Heart left ventricle (tissue), 16 donors: ENCODE measurements at regions of chr2 and their contacts with region 1.

Region 1: GRCh38 chr2:121649596-121650314 is 493 bp upstream of the CLASP1 start:
- DNase-seq: peak; percentile 97 to 98 (median 98)
- ATAC-seq: peak; percentile 98 to 99 (median 98)
- H3K4me3 ChIP-seq: peak overlapping the region; percentile 70 to 98 (median 86)
- H3K27ac ChIP-seq: peak overlapping the region; percentile 92 to 100 (median 96)
- H3K4me1 ChIP-seq: peaks cover 0 to 62% (median 53%) of the 10 kb centered on the region in 12 donors
- H3K27me3 ChIP-seq: no peaks in the 10 kb centered on the region
- CTCF ChIP-seq: peak in 1 of 12 donors; percentile 4
- POLR2A ChIP-seq: peak in 1 of 2 donors; percentile 41

Region 2: DNA sequence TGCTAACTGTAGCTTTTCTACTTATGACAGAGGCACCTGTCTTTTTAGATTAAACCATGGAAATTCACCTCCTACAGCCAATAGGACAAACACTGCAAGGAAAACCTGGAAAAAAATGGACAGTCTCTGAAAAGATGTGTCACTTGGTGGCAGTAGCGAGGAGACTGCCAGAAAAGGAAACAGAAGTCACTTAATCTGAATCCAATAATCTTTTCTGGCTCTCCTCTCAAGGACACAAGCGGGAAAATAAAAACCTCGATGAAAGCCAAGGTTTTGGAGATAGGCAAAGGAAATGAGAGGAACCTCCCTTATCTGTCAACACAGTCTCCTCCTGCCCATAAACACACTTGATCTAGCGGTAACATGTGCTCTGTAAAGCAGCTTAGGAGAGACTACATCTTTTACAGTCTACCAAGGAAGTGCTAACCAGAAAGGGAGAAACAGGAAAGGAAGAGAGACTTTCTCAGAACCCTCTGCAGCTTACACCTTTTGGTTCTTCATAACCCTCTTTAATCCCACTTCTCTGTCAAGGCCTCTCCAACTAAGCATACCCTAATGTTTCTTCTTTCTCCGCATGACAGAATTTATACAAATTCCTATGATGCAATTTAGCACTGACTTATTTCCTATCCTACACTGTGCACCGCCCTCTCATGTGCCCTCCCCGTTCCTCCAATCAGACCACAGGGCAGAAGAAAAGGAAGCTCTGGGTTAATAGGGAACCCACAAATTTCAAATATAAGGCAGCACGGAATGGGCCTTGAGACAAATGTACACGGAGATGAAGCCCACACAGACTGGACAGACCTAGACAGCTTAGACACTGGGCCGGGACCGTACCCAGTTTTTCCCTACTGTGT is 53.3 kb before region 1 on chr2:
- intact Hi-C with region 1: loop called in 9 of 10 experiments (anchors 1 to 5 kb)
- DNase-seq: peak in 1 of 5 donors; percentile 31
- ATAC-seq: peak; percentile 50 to 81 (median 72)
- H3K4me3 ChIP-seq: peak overlapping the region in 8 of 12 donors; percentile 4 to 37 (median 25)
- H3K27ac ChIP-seq: peak overlapping the region; percentile 25 to 82 (median 58)
- H3K4me1 ChIP-seq: peaks cover 0 to 50% (median 27%) of the 10 kb centered on the region in 12 donors
- H3K27me3 ChIP-seq: no peaks in the 10 kb centered on the region
- CTCF ChIP-seq: peak; percentile 25 to 75 (median 56)
- POLR2A ChIP-seq: no peak

Region 3: GRCh38 chr2:121605820-121606733 is 43.7 kb before region 1 on chr2:
- intact Hi-C with region 1: loop called in 4 of 10 experiments (anchors 5 kb)
- DNase-seq: no peak
- ATAC-seq: peak; percentile 38 to 71 (median 53)
- H3K4me3 ChIP-seq: no peak overlapping the region
- H3K27ac ChIP-seq: peak overlapping the region in 9 of 12 donors; percentile 4 to 69 (median 33)
- H3K4me1 ChIP-seq: peaks cover 0 to 76% (median 28%) of the 10 kb centered on the region in 12 donors
- H3K27me3 ChIP-seq: no peaks in the 10 kb centered on the region
- CTCF ChIP-seq: peak in 2 of 12 donors; percentile 12 to 26
- POLR2A ChIP-seq: no peak

Region 4: DNA sequence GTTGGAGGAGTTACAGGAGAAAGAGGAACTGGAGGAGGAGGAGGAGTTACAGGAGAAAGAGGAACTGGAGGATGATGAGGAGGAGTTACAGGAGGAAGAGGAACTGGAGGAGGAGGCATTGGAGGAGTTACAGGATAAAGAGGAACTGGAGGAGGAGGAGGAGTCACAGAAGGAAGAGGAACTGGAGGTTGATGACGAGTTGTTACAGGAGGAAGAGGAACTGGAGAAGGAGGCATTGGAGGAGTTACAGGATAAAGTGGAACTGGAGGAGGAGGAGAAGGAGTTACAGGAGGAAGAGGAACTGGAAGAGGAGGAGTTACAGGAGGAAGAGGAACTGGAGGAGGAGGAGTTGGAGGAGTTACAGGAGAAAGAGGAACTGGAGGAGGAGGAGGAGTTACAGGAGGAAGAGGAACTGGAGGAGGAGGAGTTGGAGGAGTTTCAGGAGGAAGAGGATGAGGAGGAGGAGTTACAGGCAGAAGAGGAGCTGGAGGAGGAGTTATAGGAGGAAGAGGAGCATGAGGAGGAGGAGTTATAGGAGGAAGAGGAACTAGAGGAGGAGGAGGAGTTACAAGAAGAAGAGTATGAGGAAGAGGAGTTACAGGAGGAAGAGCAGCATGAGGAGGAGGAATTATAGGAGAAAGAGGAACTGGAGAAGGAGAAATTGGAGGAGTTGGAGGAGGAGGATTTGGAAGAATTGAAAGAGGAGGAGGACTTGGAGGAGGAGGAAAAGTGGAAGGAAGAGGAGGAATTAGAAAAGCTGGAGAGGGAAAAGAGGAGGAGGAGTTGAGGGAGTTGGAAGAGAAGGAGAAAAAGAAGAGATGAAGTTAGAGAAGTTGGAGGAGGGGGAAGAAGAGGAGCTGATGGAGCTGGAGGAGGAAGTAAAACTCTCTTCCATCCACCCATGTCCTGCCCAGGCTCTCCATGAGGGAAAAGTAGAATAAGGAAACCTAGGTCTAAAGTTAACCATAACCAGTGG is 37.7 kb before region 1 on chr2:
- intact Hi-C with region 1: loop called in 2 of 10 experiments (anchors 5 kb)
- DNase-seq: no peak
- ATAC-seq: no peak
- H3K4me3 ChIP-seq: no peak overlapping the region
- H3K27ac ChIP-seq: peak overlapping the region in 6 of 12 donors; percentile 11 to 38 (median 18)
- H3K4me1 ChIP-seq: peaks cover 0 to 69% (median 42%) of the 10 kb centered on the region in 12 donors
- H3K27me3 ChIP-seq: no peaks in the 10 kb centered on the region
- CTCF ChIP-seq: no peak
- POLR2A ChIP-seq: no peak

Region 5: DNA sequence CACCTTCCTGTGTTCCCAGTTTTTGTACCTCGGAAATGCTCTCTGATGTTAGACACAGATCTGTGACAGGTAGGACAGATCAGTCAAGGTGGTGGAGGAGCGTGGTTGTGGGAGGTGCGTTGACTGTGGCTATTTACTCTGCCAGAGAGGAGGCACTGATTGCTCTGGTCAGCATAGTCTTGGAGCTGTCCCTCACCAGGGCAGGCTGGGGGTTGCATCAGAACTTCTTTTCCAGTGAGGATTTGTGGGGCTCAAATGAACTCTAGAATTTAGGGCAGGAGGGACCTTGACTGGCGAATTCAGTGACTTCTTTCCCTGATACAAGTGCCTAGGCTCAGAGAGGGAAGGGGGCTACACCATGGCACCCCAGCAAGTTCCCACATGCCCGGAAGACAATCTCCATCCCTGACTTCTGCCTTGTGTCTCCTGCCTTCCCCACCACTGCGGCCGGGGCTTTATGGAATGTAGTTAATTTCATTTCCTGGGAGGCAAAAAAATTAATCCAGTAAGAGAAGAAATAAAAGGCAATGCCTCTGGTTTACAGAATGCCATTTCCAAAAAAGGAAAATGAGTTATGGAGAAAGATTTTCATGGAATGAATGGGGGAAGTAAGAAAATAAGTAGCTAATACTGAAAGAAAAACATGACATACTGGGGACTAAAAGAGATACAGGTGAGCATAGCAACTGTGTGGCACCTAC is 60.9 kb after region 1 on chr2:
- intact Hi-C with region 1: loop called in 4 of 10 experiments (anchors 5 to 10 kb)
- DNase-seq: no peak
- ATAC-seq: no peak
- H3K4me3 ChIP-seq: no peak overlapping the region
- H3K27ac ChIP-seq: no peak overlapping the region
- H3K4me1 ChIP-seq: peaks cover 0 to under 1% (median 0%) of the 10 kb centered on the region in 12 donors
- H3K27me3 ChIP-seq: no peaks in the 10 kb centered on the region
- CTCF ChIP-seq: no peak
- POLR2A ChIP-seq: no peak

Region 6: DNA sequence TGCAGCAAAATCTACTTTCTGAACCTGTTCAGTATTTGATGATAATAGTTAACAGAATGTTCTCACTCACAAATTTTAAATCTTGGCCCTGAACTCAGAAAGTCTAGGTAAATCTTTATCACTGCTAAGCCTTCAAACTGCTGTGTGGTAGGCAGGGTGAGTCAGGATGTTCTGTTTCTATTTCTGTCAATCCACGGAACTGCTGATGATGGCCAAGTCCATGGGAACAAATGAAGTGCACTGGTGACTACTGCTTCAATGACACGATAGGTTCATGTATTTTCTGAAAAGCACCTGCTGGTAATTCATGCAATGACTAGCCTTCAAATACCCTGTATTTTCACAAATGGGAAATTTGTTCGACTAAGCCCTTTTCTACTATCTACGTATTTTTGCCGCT is 72.7 kb after region 1 on chr2:
- intact Hi-C with region 1: loop called in 4 of 10 experiments (anchors 5 to 10 kb)
- DNase-seq: no peak
- ATAC-seq: peak; percentile 56 to 82 (median 74)
- H3K4me3 ChIP-seq: no peak overlapping the region
- H3K27ac ChIP-seq: peak overlapping the region in 2 of 12 donors; percentile 18 to 26
- H3K4me1 ChIP-seq: peaks cover 0 to 15% (median 0%) of the 10 kb centered on the region in 12 donors
- H3K27me3 ChIP-seq: no peaks in the 10 kb centered on the region
- CTCF ChIP-seq: no peak
- POLR2A ChIP-seq: no peak

Region 7: GRCh38 chr2:121736462-121737341 is 86.9 kb after region 1 on chr2 and contains the start of gene NIFK:
- intact Hi-C with region 1: loop called in 1 of 10 experiments (anchors 2 kb)
- DNase-seq: peak; percentile 99 to 100 (median 99)
- ATAC-seq: peak; percentile 98 to 99 (median 98)
- H3K4me3 ChIP-seq: peak within 1 kb of the TSS; percentile 40 to 98 (median 82)
- H3K27ac ChIP-seq: peak within 1 kb of the TSS; percentile 53 to 86 (median 78)
- H3K4me1 ChIP-seq: peaks cover 0 to 18% (median 9%) of the 10 kb centered on the region in 12 donors
- H3K27me3 ChIP-seq: no peaks in the 10 kb centered on the region
- CTCF ChIP-seq: peak in 2 of 12 donors; percentile 13 to 23
- POLR2A ChIP-seq: peak in 1 of 2 donors; percentile 35
- total RNA-seq, gene NIFK: 19.1 to 41.3 (median 28.8) TPM

Region 8: GRCh38 chr2:122145856-122146255 is 496.1 kb after region 1 on chr2:
- intact Hi-C with region 1: no loop called
- DNase-seq: no peak
- ATAC-seq: no peak
- H3K4me3 ChIP-seq: no peak overlapping the region
- H3K27ac ChIP-seq: no peak overlapping the region
- H3K4me1 ChIP-seq: no peaks in the 10 kb centered on the region
- H3K27me3 ChIP-seq: peaks cover 0 to 6% (median 0%) of the 10 kb centered on the region in 9 donors
- CTCF ChIP-seq: no peak
- POLR2A ChIP-seq: no peak